H1 (cell line): ENCODE measurements at regions of chr9 and their contacts with region 1.

Region 1: DNA sequence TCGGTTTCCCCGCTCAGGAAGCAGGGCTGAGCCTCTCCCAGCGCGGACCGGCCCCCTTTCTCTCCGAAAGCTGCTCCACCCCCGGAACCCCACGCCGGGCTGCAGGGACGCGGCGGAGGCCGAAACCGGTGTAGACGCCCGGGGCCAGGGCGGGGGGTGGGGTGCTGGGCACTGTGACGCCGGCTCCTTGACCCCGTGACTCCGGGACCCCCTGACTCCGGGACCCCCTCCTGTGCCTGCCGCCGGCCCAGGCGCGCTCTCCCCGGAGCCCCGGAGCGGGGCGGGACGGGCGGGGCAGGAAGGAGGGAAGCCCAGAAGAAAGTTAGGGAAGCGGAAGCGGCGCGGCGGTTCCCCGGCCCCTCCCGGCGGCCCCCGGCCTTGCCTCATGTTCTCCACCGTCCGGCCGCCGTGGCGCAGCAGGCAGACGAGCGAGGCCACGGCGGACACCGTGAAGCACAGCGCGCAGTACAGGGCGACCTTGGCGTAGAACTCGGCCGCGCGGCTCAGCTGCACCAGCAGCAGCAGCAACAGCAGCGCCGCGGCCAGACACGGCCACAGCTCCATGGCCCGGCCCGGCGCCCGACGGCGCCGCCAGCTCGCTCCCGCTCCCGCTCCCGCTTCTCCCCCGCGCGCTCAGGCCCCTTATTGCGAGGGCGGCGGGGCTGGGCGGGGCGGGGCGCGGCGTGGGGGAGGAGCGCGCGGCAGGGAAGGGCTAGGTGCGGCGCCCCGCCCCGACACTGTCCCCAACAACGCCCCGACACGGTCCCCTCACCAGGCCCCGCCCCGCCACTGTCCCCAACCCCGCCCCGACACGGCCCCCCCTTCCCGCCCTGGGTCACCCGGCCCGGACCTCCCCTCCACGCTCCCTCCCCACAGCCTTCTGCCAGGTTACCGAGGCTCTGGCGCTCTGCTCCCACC is at the start of gene AGPAT2:
- DNase-seq: peak in 1 of 2 experiments; percentile 71
- H3K4me3 ChIP-seq: peak within 1 kb of the TSS; percentile 56 to 85 (median 64)
- H3K27ac ChIP-seq: no peak within 1 kb of the TSS
- H3K4me1 ChIP-seq: peaks cover 0 to 31% (median 18%) of the 10 kb centered on the region in 4 experiments; a peak in 5 of 7 replicates
- H3K27me3 ChIP-seq: peaks cover 0 to 11% (median 5%) of the 10 kb centered on the region in 4 experiments; a peak in 4 of 7 replicates
- CTCF ChIP-seq: no peak
- EP300 ChIP-seq: no peak
- POLR2A ChIP-seq: no peak
- RAD21 ChIP-seq: no peak
- total RNA-seq, gene AGPAT2: 30.5 and 31.6 TPM in 2 replicates

Region 2: DNA sequence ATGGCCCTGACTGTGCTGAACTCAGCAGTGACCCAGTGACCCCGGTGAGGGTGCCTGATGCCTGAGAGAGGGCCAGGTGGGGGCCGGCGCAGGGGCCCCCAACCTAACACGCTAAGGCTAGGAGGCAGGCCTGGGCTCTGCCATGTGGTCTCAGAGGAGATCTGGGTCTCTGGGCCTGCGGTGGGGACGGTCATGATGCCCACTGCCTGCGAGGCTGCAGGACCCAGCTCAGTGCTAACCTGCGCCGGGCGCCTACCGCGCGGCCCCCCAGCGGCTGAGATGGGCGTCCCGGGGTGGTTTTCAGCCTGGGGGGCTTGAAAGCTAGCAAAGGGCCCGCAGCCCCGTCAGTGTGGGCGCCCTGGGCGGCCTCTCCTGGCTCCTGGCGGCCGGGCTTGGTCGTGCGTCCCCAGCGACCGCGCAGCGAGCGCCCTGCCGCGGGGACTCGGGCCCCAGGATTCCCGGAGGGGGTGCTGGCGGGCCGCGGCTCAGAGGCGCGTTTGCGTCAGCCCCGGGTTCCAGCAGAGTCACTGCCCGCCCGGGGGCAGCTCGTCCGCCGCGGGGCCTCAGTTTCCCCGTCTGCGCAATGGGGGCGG is 21.8 kb before region 1 on chr9:
- CTCF ChIA-PET with region 1: interaction called, 10 read pairs
- POLR2A ChIA-PET with region 1: no interaction called
- DNase-seq: no peak
- H3K4me3 ChIP-seq: peak overlapping the region; percentile 32 to 60 (median 43); a peak in 7 of 8 replicates
- H3K27ac ChIP-seq: no peak overlapping the region
- H3K4me1 ChIP-seq: peaks cover 0 to 4% (median 2%) of the 10 kb centered on the region in 4 experiments; a peak in 4 of 7 replicates
- H3K27me3 ChIP-seq: no peaks in the 10 kb centered on the region; a peak in 2 of 7 replicates
- CTCF ChIP-seq: peak in 2 of 3 experiments; percentile 8 to 25; a peak in 3 of 4 replicates
- EP300 ChIP-seq: no peak
- POLR2A ChIP-seq: no peak
- RAD21 ChIP-seq: 0 out of 4 replicates have a peak, but pooled peaks of 1 of the 2 experiments have one; percentile 6